Caco-2 (cell line): ENCODE measurements at regions of chr4 and their contacts with region 1.

Region 1: GRCh38 chr4:116358588-116359222 is 726.7 kb downstream of the TRAM1L1 start:
- DNase-seq: peak; percentile 70 to 85
- H3K4me3 ChIP-seq: no peak overlapping the region
- H3K4me3 Mint-ChIP-seq: no peak overlapping the region
- H3K27ac Mint-ChIP-seq: no peak overlapping the region
- H3K4me1 ChIP-seq: no peaks in the 10 kb centered on the region
- H3K4me1 Mint-ChIP-seq: no peaks in the 10 kb centered on the region
- H3K27me3 ChIP-seq: no peaks in the 10 kb centered on the region
- H3K27me3 Mint-ChIP-seq: no peaks in the 10 kb centered on the region
- CTCF ChIP-seq: peak; percentile 56 to 62

Region 2: DNA sequence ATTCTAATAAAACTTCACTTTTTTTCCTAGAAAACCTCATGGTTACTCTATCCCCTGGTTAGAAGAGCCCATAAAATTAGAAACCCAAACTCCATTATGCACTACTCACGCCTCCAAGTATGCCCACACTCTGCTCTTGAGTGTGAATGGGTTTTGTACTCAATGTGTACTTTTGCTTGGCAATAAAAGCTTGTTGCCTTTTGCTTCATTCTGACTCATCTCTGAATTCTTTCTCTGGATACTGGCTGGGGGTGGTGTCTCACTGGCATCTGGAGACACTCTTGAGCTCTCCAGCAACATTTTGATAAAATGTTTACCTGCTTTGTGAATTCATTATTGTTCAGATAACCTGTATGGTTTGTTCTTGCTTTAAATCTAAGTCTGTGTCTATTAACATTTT is 236.6 kb before region 1 on chr4:
- CTCF ChIA-PET with region 1: no interaction called
- POLR2A ChIA-PET with region 1: no interaction called
- intact Hi-C with region 1: no loop called
- DNase-seq: peak in 1 of 2 experiments; percentile 16
- H3K4me3 ChIP-seq: no peak overlapping the region
- H3K4me3 Mint-ChIP-seq: no peak overlapping the region
- H3K27ac Mint-ChIP-seq: peak overlapping the region; percentile 69
- H3K4me1 ChIP-seq: peaks cover 6% of the 10 kb centered on the region; the same call in 1 of the 2 replicates
- H3K4me1 Mint-ChIP-seq: peaks cover 19% of the 10 kb centered on the region
- H3K27me3 ChIP-seq: no peaks in the 10 kb centered on the region
- H3K27me3 Mint-ChIP-seq: no peaks in the 10 kb centered on the region
- CTCF ChIP-seq: no peak

Region 3: DNA sequence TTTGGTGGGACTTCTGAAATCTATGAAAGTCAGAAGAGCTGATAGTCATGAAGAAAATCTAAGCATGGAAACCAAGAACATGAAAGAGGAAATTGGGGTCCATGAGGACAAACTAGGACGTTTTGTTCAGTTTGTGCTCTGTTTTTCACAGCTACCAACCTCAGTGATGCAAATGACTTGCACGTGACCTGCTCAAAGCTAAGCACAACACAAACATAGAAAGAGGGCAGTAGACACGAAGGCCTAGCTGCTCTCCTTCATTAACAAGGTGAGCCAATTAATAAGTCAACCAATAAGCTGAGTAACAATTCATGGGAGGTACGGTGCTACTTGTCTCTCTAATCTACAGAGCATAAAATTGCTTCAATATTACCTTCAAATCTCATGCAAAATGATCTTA is 42.6 kb after region 1 on chr4:
- CTCF ChIA-PET with region 1: no interaction called
- POLR2A ChIA-PET with region 1: no interaction called
- intact Hi-C with region 1: loop called (anchors 1 kb)
- DNase-seq: no peak
- H3K4me3 ChIP-seq: no peak overlapping the region
- H3K4me3 Mint-ChIP-seq: no peak overlapping the region
- H3K27ac Mint-ChIP-seq: no peak overlapping the region
- H3K4me1 ChIP-seq: no peaks in the 10 kb centered on the region
- H3K4me1 Mint-ChIP-seq: no peaks in the 10 kb centered on the region
- H3K27me3 ChIP-seq: no peaks in the 10 kb centered on the region
- H3K27me3 Mint-ChIP-seq: no peaks in the 10 kb centered on the region
- CTCF ChIP-seq: no peak

Region 4: GRCh38 chr4:116702951-116703350 is 344.2 kb after region 1 on chr4:
- CTCF ChIA-PET with region 1: no interaction called
- POLR2A ChIA-PET with region 1: no interaction called
- intact Hi-C with region 1: loop called (anchors 1 kb)
- DNase-seq: peak in 1 of 2 experiments; percentile 34
- H3K4me3 ChIP-seq: no peak overlapping the region
- H3K4me3 Mint-ChIP-seq: no peak overlapping the region
- H3K27ac Mint-ChIP-seq: no peak overlapping the region
- H3K4me1 ChIP-seq: no peaks in the 10 kb centered on the region
- H3K4me1 Mint-ChIP-seq: no peaks in the 10 kb centered on the region
- H3K27me3 ChIP-seq: no peaks in the 10 kb centered on the region
- H3K27me3 Mint-ChIP-seq: no peaks in the 10 kb centered on the region
- CTCF ChIP-seq: peak; percentile 42 to 54